ENCODE measurements at regions of chr3 and their contacts with region 1.

Region 1: DNA sequence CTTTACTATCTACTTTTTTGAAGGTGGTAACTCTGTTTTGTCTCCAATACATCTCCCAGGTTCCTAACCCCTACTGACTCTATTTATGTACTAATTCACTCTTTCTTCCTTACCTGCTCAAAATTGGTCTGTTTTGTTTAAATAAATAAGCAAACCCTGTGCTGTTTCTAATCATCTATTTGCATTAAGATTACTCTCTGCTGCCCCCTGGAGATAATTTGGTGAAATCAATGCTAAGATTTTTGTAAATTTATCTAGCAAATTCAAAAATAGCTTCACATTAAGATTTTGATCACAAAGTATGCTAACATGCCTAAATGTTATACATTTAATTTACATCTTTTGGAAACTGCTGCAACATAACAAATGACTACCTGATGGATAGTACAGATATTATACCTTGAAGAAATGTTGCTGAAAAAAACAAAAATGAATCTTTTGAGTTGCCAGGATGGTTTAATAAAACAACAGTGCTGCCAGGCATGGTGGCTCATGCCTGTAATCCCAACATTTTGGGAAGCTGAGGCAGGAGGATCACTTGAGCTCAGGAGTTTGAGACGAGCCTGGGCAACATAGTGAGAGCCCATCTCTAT is 4.4 kb upstream of the CD200R1 start:
- DNase-seq: no peak
- ATAC-seq: no peak

Region 2: DNA sequence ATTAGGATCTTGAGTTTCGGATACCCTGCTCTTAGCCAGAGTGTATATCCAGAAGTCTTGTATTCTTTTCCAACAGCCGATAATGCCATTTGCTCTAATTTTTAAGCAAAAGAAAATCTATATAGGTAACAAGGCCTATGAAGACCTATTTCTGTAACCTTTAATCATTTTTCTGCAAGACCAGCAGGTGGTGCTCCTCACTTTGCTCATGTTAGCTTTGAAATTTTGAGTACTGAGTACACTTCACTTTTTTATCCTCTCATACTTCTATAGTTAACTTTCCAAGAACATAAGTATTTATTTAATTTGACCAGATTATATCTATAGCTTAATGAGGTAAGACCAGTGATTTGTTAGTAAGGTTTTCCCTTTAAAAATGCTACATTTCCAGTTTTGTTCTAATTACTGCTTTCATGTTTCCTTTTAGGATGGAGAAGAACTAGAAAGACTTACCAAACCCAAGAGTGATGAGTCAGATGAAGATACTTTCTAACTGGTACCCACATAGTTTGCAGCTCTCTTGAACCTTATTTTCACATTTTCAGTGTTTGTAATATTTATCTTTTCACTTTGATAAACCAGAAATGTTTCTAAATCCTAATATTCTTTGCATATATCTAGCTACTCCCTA is 397.0 kb before region 1 on chr3:
- intact Hi-C with region 1: loop called (anchors 5 kb)
- DNase-seq: no peak
- ATAC-seq: no peak

Region 3: GRCh38 chr3:112642912-112643506 is 336.3 kb before region 1 on chr3:
- intact Hi-C with region 1: loop called (anchors 5 kb)
- DNase-seq: peak; percentile 78
- ATAC-seq: peak; percentile 83

Region 4: GRCh38 chr3:112990672-112991602 is 11.6 kb after region 1 on chr3 and contains the start of gene GTPBP8:
- intact Hi-C with region 1: no loop called
- DNase-seq: peak; percentile 96
- ATAC-seq: peak; percentile 99
- total RNA-seq, gene GTPBP8: 34.6 TPM

Region 5: GRCh38 chr3:113043686-113044085 is 64.3 kb after region 1 on chr3:
- intact Hi-C with region 1: no loop called
- DNase-seq: no peak
- ATAC-seq: no peak

Measured in left ventricle myocardium superior (tissue), 1 donor.